Activated CD4-positive, alpha-beta T cell treated with anti-CD3 and anti-CD28 coated beads for 36 hours (primary cell): ENCODE measurements at regions of chr17 and their contacts with region 1.

Region 1: GRCh38 chr17:8138672-8139371 is 13.4 kb downstream of the PER1 start:
- DNase-seq: peak; percentile 98
- ATAC-seq: peak; percentile 90
- H3K4me3 Mint-ChIP-seq: no peak overlapping the region
- H3K27ac Mint-ChIP-seq: no peak overlapping the region
- H3K4me1 Mint-ChIP-seq: no peaks in the 10 kb centered on the region
- H3K27me3 Mint-ChIP-seq: no peaks in the 10 kb centered on the region

Region 2: GRCh38 chr17:8151123-8151640 is 12.4 kb after region 1 on chr17:
- CTCF ChIA-PET with region 1: interaction called, 36 read pairs
- POLR2A ChIA-PET with region 1: interaction called, 14 read pairs
- intact Hi-C with region 1: loop called (anchors 1 kb)
- DNase-seq: peak; percentile 93
- ATAC-seq: peak; percentile 35
- H3K4me3 Mint-ChIP-seq: no peak overlapping the region
- H3K27ac Mint-ChIP-seq: peak overlapping the region; percentile 80
- H3K4me1 Mint-ChIP-seq: peaks cover 30% of the 10 kb centered on the region
- H3K27me3 Mint-ChIP-seq: no peaks in the 10 kb centered on the region